Activated CD4-positive, alpha-beta T cell treated with anti-CD3 and anti-CD28 coated beads, Interleukin-2, amount 10 ng/mL, durations not matched to agents 24 days and 14 days (primary cell): ENCODE measurements at regions of chr20 and their contacts with region 1.

Region 1: GRCh38 chr20:39019805-39020325 is 57.7 kb downstream of the DHX35 start:
- DNase-seq: peak; percentile 68
- H3K4me3 Mint-ChIP-seq: peak overlapping the region; percentile 1
- H3K27ac Mint-ChIP-seq: peak overlapping the region; percentile 38
- H3K4me1 Mint-ChIP-seq: peaks cover 43% of the 10 kb centered on the region
- H3K27me3 Mint-ChIP-seq: no peaks in the 10 kb centered on the region

Region 2: GRCh38 chr20:38926142-38926933 is 93.5 kb before region 1 on chr20 and contains the start of gene FAM83D:
- intact Hi-C with region 1: no loop called
- DNase-seq: peak; percentile 99
- H3K4me3 Mint-ChIP-seq: peak within 1 kb of the TSS; percentile 79
- H3K27ac Mint-ChIP-seq: peak within 1 kb of the TSS; percentile 77
- H3K4me1 Mint-ChIP-seq: peaks cover 32% of the 10 kb centered on the region
- H3K27me3 Mint-ChIP-seq: no peaks in the 10 kb centered on the region
- total RNA-seq, gene FAM83D: 12.9 and 13.7 TPM in 2 replicates

Region 3: DNA sequence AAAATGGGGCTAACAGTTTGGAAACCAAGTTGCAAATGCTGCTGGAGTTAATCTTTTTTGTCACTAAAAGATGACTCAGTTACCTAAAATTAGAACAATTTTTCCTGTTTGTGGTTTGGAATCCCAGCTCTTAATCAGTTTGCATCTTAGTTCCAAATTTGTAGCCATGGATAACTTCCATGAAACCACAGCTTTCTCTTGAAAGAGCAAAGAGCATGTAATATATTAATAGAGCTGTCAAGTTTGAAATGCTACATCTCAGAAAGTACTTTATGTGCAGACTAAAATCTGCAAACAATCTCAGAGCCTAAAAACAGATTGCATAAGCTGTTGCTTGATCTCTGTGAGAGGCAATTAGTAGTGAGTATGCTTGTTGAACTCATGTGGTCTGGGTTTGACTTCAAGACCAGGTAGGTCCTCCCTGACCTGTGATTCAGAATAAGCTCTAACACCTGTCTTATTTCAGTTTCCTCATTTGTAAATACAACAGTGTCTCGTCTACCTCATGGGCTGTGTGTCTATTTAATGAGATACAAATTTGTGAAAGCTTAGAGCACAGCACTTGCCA is 34.2 kb before region 1 on chr20:
- intact Hi-C with region 1: loop called (anchors 5 kb)
- DNase-seq: no peak
- H3K4me3 Mint-ChIP-seq: no peak overlapping the region
- H3K27ac Mint-ChIP-seq: peak overlapping the region; percentile 48
- H3K4me1 Mint-ChIP-seq: peaks cover 25% of the 10 kb centered on the region
- H3K27me3 Mint-ChIP-seq: no peaks in the 10 kb centered on the region

Region 4: DNA sequence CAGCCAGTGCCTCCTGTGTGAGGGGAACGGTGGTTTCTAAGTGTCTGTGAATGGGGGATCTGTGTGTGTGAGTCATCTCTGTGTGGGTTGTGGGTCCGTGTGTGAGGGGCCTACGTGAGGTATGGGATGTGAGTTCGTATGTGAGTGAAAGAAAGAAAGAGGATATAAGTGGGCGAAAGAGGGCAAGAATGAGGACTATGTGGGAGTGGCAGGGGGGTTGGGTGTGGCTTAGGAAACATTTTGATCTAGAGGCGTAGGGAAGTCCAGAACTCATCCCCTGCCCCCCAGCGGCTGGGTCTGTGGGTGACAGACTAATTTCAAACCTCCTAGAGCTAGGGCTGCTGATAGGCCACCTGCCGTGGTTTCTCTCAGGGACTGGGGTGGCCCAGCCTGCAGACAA is 22.2 kb before region 1 on chr20:
- intact Hi-C with region 1: loop called (anchors 1 kb)
- DNase-seq: peak; percentile 77
- H3K4me3 Mint-ChIP-seq: peak overlapping the region; percentile 17
- H3K27ac Mint-ChIP-seq: peak overlapping the region; percentile 77
- H3K4me1 Mint-ChIP-seq: peaks cover 30% of the 10 kb centered on the region
- H3K27me3 Mint-ChIP-seq: no peaks in the 10 kb centered on the region